ENCODE measurements at regions of chr11 and their contacts with region 1.

Region 1: GRCh38 chr11:59207988-59208451 is 4.7 kb downstream of the MPEG1 start:
- DNase-seq: peak; percentile 89
- ATAC-seq: peak; percentile 77
- H3K4me3 ChIP-seq: peak overlapping the region; percentile 64
- H3K27ac ChIP-seq: peak overlapping the region; percentile 76
- H3K4me1 ChIP-seq: peaks cover 51% of the 10 kb centered on the region
- H3K27me3 ChIP-seq: no peaks in the 10 kb centered on the region
- CTCF ChIP-seq: peak; percentile 74 to 87 (median 78); a peak in 5 of 6 replicates
- EP300 ChIP-seq: peak; percentile 62 to 68; a peak in 3 of 4 replicates
- POLR2A ChIP-seq: no peak
- RAD21 ChIP-seq: peak; percentile 77

Region 2: DNA sequence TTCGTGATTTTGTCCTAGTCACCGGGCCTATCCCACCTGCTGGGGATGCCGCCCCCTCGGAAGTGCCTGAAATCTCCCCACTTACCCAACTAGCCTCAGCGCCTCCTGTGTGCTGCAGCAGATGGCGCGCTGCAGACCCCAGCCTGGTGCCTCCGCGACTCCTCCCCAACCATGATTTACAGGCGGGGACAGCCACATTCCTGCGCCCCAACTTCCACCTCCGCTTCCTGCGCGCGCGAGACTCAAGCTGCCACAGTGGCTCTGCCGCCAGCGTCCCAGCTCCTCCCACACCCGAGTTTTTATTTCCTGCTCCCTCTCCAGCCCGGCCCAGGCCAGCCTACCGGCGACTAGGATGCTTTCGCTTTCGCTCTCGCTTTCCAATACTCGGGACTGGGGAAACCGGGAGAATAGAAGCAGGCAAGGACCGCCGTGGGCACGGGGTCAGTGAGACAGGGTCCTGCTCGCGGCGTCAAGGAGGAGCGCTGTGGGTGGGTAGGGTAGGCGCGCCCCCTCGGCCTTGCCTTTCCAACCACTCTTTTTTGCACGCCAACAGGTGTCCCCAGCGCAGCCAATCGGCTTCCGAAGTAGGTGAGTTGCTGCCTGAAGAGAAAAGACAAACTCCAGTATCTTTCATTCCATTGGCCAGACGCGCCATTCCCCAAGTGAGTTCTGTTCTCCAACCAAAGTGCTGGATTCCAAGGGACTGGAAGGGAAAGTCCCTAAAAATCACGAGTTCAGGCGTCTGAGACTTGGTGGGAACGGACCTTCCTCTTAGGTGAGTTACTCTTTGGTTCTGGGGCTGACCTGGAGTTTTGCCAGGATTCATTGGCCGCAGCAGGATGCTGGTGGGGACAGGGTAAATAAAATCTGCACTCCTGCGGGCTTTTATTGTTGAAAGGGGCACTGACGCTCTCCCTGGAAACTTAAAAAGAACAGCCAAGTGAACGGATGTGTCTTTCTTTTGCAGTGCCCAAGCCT is 65.2 kb before region 1 on chr11 and contains the start of gene FAM111A:
- CTCF ChIA-PET with region 1: interaction called, 8 read pairs
- POLR2A ChIA-PET with region 1: no interaction called
- RAD21 ChIA-PET with region 1: no interaction called
- SMC1A ChIA-PET with region 1: interaction called, 3 read pairs
- in situ Hi-C with region 1: no loop called
- intact Hi-C with region 1: loop called (anchors 2 kb)
- DNase-seq: peak; percentile 69
- ATAC-seq: peak; percentile 85
- H3K4me3 ChIP-seq: peak within 1 kb of the TSS; percentile 83
- H3K27ac ChIP-seq: peak within 1 kb of the TSS; percentile 91
- H3K4me1 ChIP-seq: peaks cover 21% of the 10 kb centered on the region; the same call in 1 of the 2 replicates
- H3K27me3 ChIP-seq: no peaks in the 10 kb centered on the region
- CTCF ChIP-seq: peak; percentile 39 to 54 (median 39)
- EP300 ChIP-seq: no peak
- POLR2A ChIP-seq: peak; percentile 73; the same call in 1 of the 2 replicates
- RAD21 ChIP-seq: peak; percentile 44; the same call in 1 of the 2 replicates
- polyA plus RNA-seq, gene FAM111A: 26.6 to 41.6 TPM

Region 3: GRCh38 chr11:59186130-59186594 is 21.9 kb before region 1 on chr11:
- CTCF ChIA-PET with region 1: interaction called, 1,180 read pairs
- POLR2A ChIA-PET with region 1: interaction called, 3 read pairs
- RAD21 ChIA-PET with region 1: interaction called, 12 read pairs
- SMC1A ChIA-PET with region 1: interaction called, 155 read pairs
- in situ Hi-C with region 1: no loop called
- intact Hi-C with region 1: no loop called
- DNase-seq: no peak
- ATAC-seq: peak; percentile 88
- H3K4me3 ChIP-seq: no peak overlapping the region
- H3K27ac ChIP-seq: no peak overlapping the region
- H3K4me1 ChIP-seq: peaks cover 10% of the 10 kb centered on the region
- H3K27me3 ChIP-seq: no peaks in the 10 kb centered on the region
- CTCF ChIP-seq: peak; percentile 67 to 92 (median 89)
- EP300 ChIP-seq: no peak
- POLR2A ChIP-seq: no peak
- RAD21 ChIP-seq: peak; percentile 46

Region 4: GRCh38 chr11:59197991-59198390 is 10.0 kb before region 1 on chr11:
- CTCF ChIA-PET with region 1: interaction called, 1,180 read pairs
- POLR2A ChIA-PET with region 1: interaction called, 7 read pairs
- RAD21 ChIA-PET with region 1: interaction called, 17 read pairs
- SMC1A ChIA-PET with region 1: interaction called, 28 read pairs
- in situ Hi-C with region 1: no loop called
- intact Hi-C with region 1: loop called (anchors 1 kb)
- DNase-seq: no peak
- ATAC-seq: no peak
- H3K4me3 ChIP-seq: no peak overlapping the region
- H3K27ac ChIP-seq: peak overlapping the region; percentile 94
- H3K4me1 ChIP-seq: peaks cover 35% of the 10 kb centered on the region
- H3K27me3 ChIP-seq: no peaks in the 10 kb centered on the region
- CTCF ChIP-seq: no peak
- EP300 ChIP-seq: no peak
- POLR2A ChIP-seq: no peak
- RAD21 ChIP-seq: no peak

Region 5: DNA sequence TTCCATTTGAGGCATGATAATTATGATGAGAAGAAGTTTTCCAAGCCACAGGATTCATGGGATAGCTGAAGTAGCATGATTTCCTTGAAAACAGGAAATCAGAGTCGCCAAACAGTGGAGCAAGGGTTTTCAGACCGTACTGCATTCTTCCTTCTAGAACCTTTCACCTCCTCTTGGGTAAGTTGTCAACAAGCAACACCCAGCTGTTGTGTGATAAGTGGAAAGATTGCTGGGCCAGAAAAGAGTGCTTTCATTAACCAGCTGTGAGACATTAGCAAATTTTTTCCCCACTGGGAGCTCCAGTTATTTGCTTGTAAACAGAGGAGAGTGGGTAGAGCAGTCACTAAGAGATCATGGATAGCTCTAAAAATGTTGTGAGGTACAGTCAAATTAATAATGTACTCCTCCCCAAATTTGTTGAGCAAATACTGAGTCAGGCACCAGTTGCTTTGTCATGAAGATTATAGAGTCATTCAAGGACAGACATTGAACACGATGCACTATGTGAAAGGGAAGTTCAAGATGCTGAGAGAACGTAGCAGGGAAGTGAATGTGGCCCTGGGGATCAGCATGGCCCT is 16.4 kb after region 1 on chr11:
- CTCF ChIA-PET with region 1: interaction called, 17 read pairs
- POLR2A ChIA-PET with region 1: interaction called, 6 read pairs
- RAD21 ChIA-PET with region 1: interaction called, 14 read pairs
- SMC1A ChIA-PET with region 1: interaction called, 34 read pairs
- in situ Hi-C with region 1: no loop called
- intact Hi-C with region 1: no loop called
- DNase-seq: no peak
- ATAC-seq: peak; percentile 49
- H3K4me3 ChIP-seq: no peak overlapping the region
- H3K27ac ChIP-seq: peak overlapping the region; percentile 50
- H3K4me1 ChIP-seq: peaks cover 45% of the 10 kb centered on the region
- H3K27me3 ChIP-seq: no peaks in the 10 kb centered on the region
- CTCF ChIP-seq: no peak
- EP300 ChIP-seq: no peak
- POLR2A ChIP-seq: no peak
- RAD21 ChIP-seq: no peak

Measured in GM12878 (cell line).